ENCODE measurements at regions of chr18 and their contacts with region 1.

Region 1: DNA sequence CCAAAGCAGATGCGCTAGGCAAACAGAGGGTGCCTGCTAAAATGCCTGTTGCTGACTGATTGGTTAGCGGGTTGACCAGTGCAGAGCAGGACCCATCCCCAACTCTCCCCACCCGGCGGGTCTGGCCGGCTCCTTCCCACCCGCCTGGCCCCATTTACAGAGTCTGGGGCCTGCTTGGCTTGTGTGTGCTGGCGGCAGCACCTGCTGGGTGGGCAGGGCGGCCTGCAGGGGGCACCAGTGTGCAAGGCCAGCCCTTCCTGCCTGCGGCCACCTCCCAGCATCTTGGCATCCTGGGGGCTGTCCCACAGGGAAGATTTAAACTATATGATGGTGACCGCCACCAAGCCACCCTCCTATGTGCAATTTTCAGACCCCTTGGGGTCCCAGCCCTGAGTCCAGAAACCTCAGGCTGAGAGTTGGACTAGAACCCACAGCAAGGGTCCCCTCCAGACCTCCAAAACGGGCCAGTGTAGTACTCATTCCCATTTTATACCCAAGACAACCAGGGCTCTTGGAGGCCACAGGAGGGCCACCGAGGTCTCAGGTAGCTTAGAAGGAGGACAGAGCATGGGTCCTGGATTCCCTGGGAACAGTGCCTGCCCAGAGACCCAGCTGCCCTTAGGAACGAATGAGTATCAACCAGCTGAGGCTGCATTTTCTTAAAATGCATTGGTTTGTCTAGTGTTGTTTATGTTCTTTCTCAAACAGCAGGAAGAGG is 173.6 kb downstream of the SMAD7 start:
- DNase-seq: peak; percentile 46
- H3K4me3 ChIP-seq: no peak overlapping the region
- H3K27ac ChIP-seq: no peak overlapping the region
- H3K4me1 ChIP-seq: peaks cover 22% of the 10 kb centered on the region
- H3K27me3 ChIP-seq: no peaks in the 10 kb centered on the region
- CTCF ChIP-seq: peak; percentile 93 to 95
- POLR2A ChIP-seq: no peak

Region 2: DNA sequence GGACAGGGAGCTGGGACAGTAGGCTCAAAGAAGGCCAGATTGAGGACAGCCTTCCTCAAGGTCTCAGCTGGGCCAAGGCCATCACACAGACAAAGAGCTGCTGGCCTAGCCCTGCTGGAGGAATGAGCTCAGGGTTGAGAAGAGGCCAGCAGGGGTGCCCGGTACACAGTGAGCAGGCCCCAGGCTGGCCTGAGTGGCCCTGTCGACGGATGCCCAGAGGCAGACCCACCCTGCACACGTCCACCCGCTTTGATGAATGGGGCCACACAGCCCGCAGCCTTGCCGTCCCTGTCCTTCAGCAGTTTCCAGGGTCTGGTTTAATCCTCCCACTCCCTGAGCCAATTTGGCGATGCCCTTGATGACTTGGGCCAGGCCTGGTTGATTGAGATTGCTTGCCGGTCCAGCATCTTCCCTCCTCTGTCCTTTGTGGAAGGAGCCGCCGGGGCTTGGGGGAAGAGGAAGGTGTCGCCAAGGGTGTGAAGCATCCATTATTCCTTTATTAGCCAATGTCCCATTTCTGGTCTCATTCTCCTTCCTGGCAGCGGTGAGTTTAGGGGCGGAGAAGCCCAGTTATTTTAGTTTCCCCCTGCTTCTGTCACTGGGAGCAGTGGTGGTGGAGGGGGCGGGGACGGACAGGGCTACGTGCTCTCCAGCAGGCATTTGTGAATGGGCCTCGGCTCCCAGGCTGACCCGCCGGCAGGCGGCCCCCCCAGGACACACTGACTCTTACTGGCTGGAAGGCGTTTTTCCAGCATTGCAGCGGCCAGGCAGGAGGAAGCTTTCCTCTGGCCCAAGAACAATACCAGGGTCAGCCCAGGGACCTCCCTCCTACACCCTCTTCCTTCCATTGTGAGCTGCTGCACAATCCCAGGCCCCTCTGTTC is 96.6 kb before region 1 on chr18:
- CTCF ChIA-PET with region 1: interaction called, 7 read pairs
- POLR2A ChIA-PET with region 1: no interaction called
- dilution Hi-C with region 1: no loop called
- intact Hi-C with region 1: loop called (anchors 1 kb)
- DNase-seq: peak; percentile 96
- H3K4me3 ChIP-seq: no peak overlapping the region
- H3K27ac ChIP-seq: peak overlapping the region; percentile 42
- H3K4me1 ChIP-seq: peaks cover 17% of the 10 kb centered on the region
- H3K27me3 ChIP-seq: no peaks in the 10 kb centered on the region
- CTCF ChIP-seq: peak; percentile 26 to 67
- POLR2A ChIP-seq: no peak

Region 3: GRCh38 chr18:48827291-48828193 is 50.4 kb after region 1 on chr18:
- CTCF ChIA-PET with region 1: interaction called, 7 read pairs
- POLR2A ChIA-PET with region 1: no interaction called
- dilution Hi-C with region 1: no loop called
- intact Hi-C with region 1: loop called (anchors 2 kb)
- DNase-seq: peak; percentile 70
- H3K4me3 ChIP-seq: no peak overlapping the region
- H3K27ac ChIP-seq: no peak overlapping the region
- H3K4me1 ChIP-seq: peaks cover 29% of the 10 kb centered on the region
- H3K27me3 ChIP-seq: no peaks in the 10 kb centered on the region
- CTCF ChIP-seq: no peak
- POLR2A ChIP-seq: no peak

Region 4: GRCh38 chr18:48866028-48866733 is 89.0 kb after region 1 on chr18:
- CTCF ChIA-PET with region 1: interaction called, 11 read pairs
- POLR2A ChIA-PET with region 1: no interaction called
- dilution Hi-C with region 1: no loop called
- intact Hi-C with region 1: no loop called
- DNase-seq: peak; percentile 91
- H3K4me3 ChIP-seq: no peak overlapping the region
- H3K27ac ChIP-seq: no peak overlapping the region
- H3K4me1 ChIP-seq: peaks cover 3% of the 10 kb centered on the region
- H3K27me3 ChIP-seq: no peaks in the 10 kb centered on the region
- CTCF ChIP-seq: no peak
- POLR2A ChIP-seq: no peak

Region 5: DNA sequence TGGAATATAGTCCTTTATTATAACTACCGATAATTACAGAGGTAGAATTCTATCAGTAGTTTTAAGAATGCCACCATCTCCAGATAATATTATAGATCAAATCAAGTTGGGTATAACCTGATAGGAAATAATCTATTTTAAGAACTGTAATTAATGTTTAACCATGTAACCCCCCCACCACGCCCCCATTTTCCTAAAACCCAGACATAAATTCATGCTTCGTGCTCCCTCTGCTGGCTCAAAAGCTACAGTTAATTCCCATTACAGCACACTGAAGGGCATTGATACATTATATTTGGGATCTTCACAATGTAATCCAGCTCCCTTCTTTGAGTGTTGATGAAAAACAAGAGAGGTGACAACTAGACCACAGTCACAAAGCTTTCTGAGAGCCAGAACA is 401.6 kb after region 1 on chr18:
- CTCF ChIA-PET with region 1: interaction called, 14 read pairs
- POLR2A ChIA-PET with region 1: no interaction called
- dilution Hi-C with region 1: no loop called
- intact Hi-C with region 1: loop called (anchors 2 kb)
- DNase-seq: peak; percentile 37
- H3K4me3 ChIP-seq: no peak overlapping the region
- H3K27ac ChIP-seq: no peak overlapping the region
- H3K4me1 ChIP-seq: peaks cover 18% of the 10 kb centered on the region
- H3K27me3 ChIP-seq: no peaks in the 10 kb centered on the region
- CTCF ChIP-seq: peak; percentile 44 to 48
- POLR2A ChIP-seq: no peak